Caco-2 (cell line): ENCODE measurements at regions of chrX and their contacts with region 1.

Region 1: DNA sequence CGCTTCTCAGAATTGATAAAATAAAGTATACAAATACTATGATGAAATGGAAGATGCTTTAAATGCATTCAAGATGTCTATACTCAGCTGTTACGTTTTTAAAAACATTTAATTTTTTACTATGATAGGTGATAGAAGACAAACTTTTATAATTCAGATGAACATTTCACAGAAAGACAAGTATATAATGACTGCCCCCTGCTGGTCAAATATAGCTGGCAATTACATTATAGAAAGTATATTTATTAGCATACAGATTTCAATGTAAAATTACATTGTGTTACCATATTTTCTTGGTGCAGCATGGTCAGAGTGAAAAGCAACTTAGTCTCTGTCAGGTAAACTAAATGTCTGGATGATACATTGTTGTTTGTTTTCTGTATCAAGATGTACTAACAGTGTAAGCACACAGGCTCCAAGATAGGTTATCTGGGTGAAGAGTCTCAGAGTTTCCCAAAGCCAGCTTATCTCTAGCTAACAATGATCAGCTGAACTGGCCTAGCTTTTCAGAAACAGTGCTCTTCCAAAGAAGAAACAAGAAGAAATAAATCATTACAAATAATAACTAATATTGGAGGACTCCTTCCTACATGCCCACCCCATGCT is 54.1 kb downstream of the SRPX start:
- DNase-seq: peak in 1 of 2 experiments; percentile 16
- H3K4me3 ChIP-seq: no peak overlapping the region
- H3K4me3 Mint-ChIP-seq: no peak overlapping the region
- H3K27ac Mint-ChIP-seq: no peak overlapping the region
- H3K4me1 ChIP-seq: peaks cover 8% of the 10 kb centered on the region; the same call in 1 of the 2 replicates
- H3K4me1 Mint-ChIP-seq: no peaks in the 10 kb centered on the region
- H3K27me3 ChIP-seq: no peaks in the 10 kb centered on the region
- H3K27me3 Mint-ChIP-seq: no peaks in the 10 kb centered on the region
- CTCF ChIP-seq: peak; percentile 18 to 53

Region 2: DNA sequence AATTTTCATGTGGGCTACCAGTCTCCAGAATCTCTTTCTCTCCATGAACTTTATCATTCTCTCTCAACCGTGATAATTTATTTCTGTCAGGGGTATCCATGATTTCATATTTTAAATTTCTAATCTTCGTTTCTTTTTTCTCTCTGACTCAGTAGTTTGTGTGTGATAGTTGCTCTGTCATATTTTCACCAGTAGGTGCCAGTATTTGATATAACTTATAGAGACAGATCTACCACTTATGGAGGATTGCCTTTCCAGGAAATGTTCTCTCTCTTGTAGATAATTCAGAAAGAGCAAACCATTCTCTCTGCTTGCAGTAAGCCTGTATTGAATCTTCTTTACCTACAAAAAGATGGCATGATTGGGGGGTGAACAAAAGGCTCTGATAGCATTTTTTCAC is 239.9 kb before region 1 on chrX:
- CTCF ChIA-PET with region 1: interaction called, 4 read pairs
- POLR2A ChIA-PET with region 1: no interaction called
- intact Hi-C with region 1: loop called (anchors 1 kb)
- DNase-seq: peak in 1 of 2 experiments; percentile 13
- H3K4me3 ChIP-seq: no peak overlapping the region
- H3K4me3 Mint-ChIP-seq: peak overlapping the region; percentile 6
- H3K27ac Mint-ChIP-seq: peak overlapping the region; percentile 34
- H3K4me1 ChIP-seq: no peaks in the 10 kb centered on the region
- H3K4me1 Mint-ChIP-seq: peaks cover 12% of the 10 kb centered on the region
- H3K27me3 ChIP-seq: no peaks in the 10 kb centered on the region
- H3K27me3 Mint-ChIP-seq: no peaks in the 10 kb centered on the region
- CTCF ChIP-seq: peak; percentile 31 to 36

Region 3: GRCh38 chrX:37998586-37999262 is 167.9 kb before region 1 on chrX:
- CTCF ChIA-PET with region 1: no interaction called
- POLR2A ChIA-PET with region 1: no interaction called
- intact Hi-C with region 1: loop called (anchors 5 kb)
- DNase-seq: no peak
- H3K4me3 ChIP-seq: no peak overlapping the region
- H3K4me3 Mint-ChIP-seq: no peak overlapping the region
- H3K27ac Mint-ChIP-seq: no peak overlapping the region
- H3K4me1 ChIP-seq: no peaks in the 10 kb centered on the region
- H3K4me1 Mint-ChIP-seq: no peaks in the 10 kb centered on the region
- H3K27me3 ChIP-seq: no peaks in the 10 kb centered on the region
- H3K27me3 Mint-ChIP-seq: no peaks in the 10 kb centered on the region
- CTCF ChIP-seq: no peak

Region 4: DNA sequence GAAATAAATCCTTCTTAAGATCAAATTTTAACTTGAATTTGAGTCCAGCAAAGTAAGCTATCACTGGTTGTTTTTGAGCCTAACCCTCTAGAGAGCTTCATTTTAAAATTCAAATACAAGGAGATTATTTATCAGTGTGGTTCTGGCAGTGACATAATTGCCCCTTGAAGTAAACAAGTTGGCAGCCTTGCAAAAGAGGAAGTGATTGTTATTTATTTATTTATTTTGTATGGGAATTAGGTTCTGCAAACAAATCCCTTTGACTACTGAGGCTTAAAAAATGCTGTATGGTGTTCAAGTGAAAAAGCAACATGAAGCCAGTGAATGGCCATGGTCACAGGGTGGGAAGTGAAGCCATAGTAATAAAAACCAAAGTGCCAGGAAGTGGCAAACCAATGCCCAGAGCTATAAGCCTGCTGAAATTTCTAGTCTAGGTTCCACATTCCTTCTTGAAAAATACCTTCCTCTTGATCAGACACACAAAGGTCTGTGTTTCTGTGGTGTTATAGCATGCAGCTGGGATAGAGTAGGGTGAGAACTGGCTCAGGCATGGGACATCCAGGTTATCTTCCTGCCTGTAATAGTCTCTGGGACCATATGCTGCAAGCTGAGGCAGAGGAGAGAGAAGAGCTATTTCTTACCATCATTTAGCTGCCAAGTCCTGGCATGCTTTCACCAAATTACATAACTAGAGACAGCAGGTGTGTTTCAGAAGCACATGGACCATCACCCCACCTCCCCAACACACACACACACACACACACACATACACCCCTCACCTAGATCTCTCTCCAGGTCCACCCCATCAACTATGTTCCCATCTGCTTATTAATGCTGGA is 347.7 kb after region 1 on chrX:
- CTCF ChIA-PET with region 1: no interaction called
- POLR2A ChIA-PET with region 1: no interaction called
- intact Hi-C with region 1: no loop called
- DNase-seq: no peak
- H3K4me3 ChIP-seq: no peak overlapping the region
- H3K4me3 Mint-ChIP-seq: no peak overlapping the region
- H3K27ac Mint-ChIP-seq: no peak overlapping the region
- H3K4me1 ChIP-seq: no peaks in the 10 kb centered on the region
- H3K4me1 Mint-ChIP-seq: no peaks in the 10 kb centered on the region
- H3K27me3 ChIP-seq: no peaks in the 10 kb centered on the region
- H3K27me3 Mint-ChIP-seq: no peaks in the 10 kb centered on the region
- CTCF ChIP-seq: no peak